ENCODE measurements at regions of chr9 and their contacts with region 1.

Region 1: GRCh38 chr9:29773676-29774075 is 2200.4 kb upstream of the C9orf72 start:
- DNase-seq: no peak
- ATAC-seq: peak; percentile 47; the same call in 2 of the 3 replicates
- H3K4me3 ChIP-seq: no peak overlapping the region
- H3K27ac ChIP-seq: no peak overlapping the region
- H3K4me1 ChIP-seq: no peaks in the 10 kb centered on the region
- H3K27me3 ChIP-seq: no peaks in the 10 kb centered on the region
- CTCF ChIP-seq: no peak
- EP300 ChIP-seq: no peak
- POLR2A ChIP-seq: no peak
- RAD21 ChIP-seq: no peak

Region 2: GRCh38 chr9:29548436-29548835 is 225.2 kb before region 1 on chr9:
- CTCF ChIA-PET with region 1: no interaction called
- POLR2A ChIA-PET with region 1: no interaction called
- RAD21 ChIA-PET with region 1: no interaction called
- SMC1A ChIA-PET with region 1: no interaction called
- in situ Hi-C with region 1: no loop called
- intact Hi-C with region 1: no loop called
- DNase-seq: no peak
- ATAC-seq: no peak
- H3K4me3 ChIP-seq: no peak overlapping the region
- H3K27ac ChIP-seq: no peak overlapping the region
- H3K4me1 ChIP-seq: no peaks in the 10 kb centered on the region
- H3K27me3 ChIP-seq: no peaks in the 10 kb centered on the region
- CTCF ChIP-seq: no peak
- EP300 ChIP-seq: no peak
- POLR2A ChIP-seq: no peak
- RAD21 ChIP-seq: no peak

Region 3: DNA sequence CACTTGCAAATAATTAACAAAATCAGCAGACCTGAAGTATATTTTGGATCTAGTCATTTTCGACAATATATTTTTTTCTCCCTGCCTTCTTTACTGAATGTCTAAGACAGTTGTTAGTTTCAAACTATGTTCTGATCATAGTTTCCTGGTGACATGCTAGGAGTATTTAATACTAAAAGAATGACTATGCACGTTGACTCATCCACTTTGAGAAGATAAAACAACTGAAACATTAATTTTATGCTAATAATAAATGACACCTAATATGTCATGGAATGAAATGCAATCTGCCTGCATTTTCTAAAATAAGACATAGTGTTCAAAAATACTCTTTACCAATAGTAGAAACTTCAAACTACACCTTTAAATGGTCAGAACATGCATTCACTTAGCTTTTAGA is 76.7 kb before region 1 on chr9:
- CTCF ChIA-PET with region 1: no interaction called
- POLR2A ChIA-PET with region 1: no interaction called
- RAD21 ChIA-PET with region 1: no interaction called
- SMC1A ChIA-PET with region 1: no interaction called
- in situ Hi-C with region 1: no loop called
- intact Hi-C with region 1: no loop called
- DNase-seq: no peak
- ATAC-seq: no peak
- H3K4me3 ChIP-seq: no peak overlapping the region
- H3K27ac ChIP-seq: no peak overlapping the region
- H3K4me1 ChIP-seq: no peaks in the 10 kb centered on the region
- H3K27me3 ChIP-seq: no peaks in the 10 kb centered on the region
- CTCF ChIP-seq: no peak
- EP300 ChIP-seq: no peak
- POLR2A ChIP-seq: no peak
- RAD21 ChIP-seq: no peak

Region 4: DNA sequence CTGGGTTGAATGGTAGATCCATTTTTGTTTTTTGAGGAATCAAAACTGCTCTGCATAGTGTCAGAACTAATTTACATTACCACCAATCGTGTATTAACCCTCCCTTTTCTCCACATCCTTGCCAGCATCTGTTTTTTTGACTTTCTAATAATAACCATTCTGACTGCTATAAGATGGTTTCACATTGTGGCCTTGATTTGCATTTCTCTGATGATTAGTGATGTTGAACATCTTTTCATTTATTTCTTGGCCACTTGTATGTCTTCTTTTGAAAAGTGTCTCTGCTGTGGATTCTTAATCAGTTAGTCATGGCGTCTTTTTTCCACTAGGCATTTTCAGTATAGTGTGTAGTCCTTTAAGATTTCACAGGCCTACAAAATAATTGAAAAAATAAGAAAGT is 56.0 kb before region 1 on chr9:
- CTCF ChIA-PET with region 1: no interaction called
- POLR2A ChIA-PET with region 1: no interaction called
- RAD21 ChIA-PET with region 1: no interaction called
- SMC1A ChIA-PET with region 1: no interaction called
- in situ Hi-C with region 1: no loop called
- intact Hi-C with region 1: loop called (anchors 10 kb)
- DNase-seq: no peak
- ATAC-seq: peak; percentile 58
- H3K4me3 ChIP-seq: no peak overlapping the region
- H3K27ac ChIP-seq: no peak overlapping the region
- H3K4me1 ChIP-seq: no peaks in the 10 kb centered on the region
- H3K27me3 ChIP-seq: no peaks in the 10 kb centered on the region
- CTCF ChIP-seq: no peak
- EP300 ChIP-seq: no peak
- POLR2A ChIP-seq: no peak
- RAD21 ChIP-seq: no peak

Measured in GM12878 (cell line).